ENCODE measurements at regions of chr3 and their contacts with region 1.

Region 1: DNA sequence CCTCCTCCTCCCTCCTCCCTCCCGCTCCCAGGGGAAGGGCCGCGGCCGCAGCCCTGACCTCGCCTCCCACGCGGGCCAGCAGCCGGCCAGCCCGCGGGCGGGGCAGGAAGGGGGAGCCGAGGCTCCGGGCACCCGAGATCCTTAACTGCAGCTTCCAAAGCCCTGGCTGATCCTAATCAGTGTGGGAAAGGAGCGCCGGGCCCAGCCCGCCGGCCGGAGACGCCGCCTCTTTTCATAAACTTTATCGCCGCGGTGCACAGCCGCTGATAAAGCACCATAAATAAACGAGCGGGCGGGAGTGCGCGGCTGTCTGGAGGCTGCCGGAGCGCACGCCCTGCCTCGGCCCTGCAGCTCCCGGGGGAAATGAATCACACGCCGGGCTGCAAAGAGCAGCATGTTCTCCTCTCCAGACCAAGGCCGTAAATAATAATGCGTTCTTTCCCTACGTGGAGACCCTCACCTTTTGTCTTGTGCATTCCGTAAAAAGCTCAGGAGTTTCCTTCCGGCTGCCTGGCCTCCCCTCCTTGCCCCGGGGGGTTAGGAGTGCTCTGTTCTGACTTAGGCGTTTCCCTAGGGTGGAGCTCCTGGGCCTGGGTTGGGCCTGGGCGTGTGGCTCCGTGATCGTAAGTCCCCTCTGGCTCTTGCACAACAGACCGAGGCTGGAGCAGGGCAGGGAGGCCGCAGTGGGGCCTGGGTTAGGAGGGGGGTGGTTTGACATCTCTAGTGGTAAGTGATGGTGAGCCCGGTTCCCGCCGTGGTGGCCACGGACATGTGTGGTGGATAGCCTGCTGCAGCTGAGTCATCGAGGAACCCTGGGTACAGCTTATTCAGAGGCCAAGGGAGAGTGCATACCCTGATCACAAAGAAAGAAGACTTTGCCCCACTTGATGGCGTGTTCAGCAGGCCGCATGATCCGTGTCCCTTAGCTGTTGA is 132.6 kb upstream of the HES1 start:
- DNase-seq: peak; percentile 90
- ATAC-seq: peak; percentile 79
- H3K4me3 ChIP-seq: peak overlapping the region; percentile 56
- H3K27ac ChIP-seq: peak overlapping the region; percentile 82
- H3K4me1 ChIP-seq: peaks cover 40% of the 10 kb centered on the region
- H3K27me3 ChIP-seq: no peaks in the 10 kb centered on the region
- CTCF ChIP-seq: no peak

Region 2: GRCh38 chr3:193253986-193254660 is 749.3 kb before region 1 on chr3:
- CTCF ChIA-PET with region 1: no interaction called
- POLR2A ChIA-PET with region 1: no interaction called
- intact Hi-C with region 1: no loop called
- DNase-seq: no peak
- ATAC-seq: no peak
- H3K4me3 ChIP-seq: no peak overlapping the region
- H3K27ac ChIP-seq: no peak overlapping the region
- H3K4me1 ChIP-seq: no peaks in the 10 kb centered on the region
- H3K27me3 ChIP-seq: peaks cover 22% of the 10 kb centered on the region
- CTCF ChIP-seq: no peak

Region 3: DNA sequence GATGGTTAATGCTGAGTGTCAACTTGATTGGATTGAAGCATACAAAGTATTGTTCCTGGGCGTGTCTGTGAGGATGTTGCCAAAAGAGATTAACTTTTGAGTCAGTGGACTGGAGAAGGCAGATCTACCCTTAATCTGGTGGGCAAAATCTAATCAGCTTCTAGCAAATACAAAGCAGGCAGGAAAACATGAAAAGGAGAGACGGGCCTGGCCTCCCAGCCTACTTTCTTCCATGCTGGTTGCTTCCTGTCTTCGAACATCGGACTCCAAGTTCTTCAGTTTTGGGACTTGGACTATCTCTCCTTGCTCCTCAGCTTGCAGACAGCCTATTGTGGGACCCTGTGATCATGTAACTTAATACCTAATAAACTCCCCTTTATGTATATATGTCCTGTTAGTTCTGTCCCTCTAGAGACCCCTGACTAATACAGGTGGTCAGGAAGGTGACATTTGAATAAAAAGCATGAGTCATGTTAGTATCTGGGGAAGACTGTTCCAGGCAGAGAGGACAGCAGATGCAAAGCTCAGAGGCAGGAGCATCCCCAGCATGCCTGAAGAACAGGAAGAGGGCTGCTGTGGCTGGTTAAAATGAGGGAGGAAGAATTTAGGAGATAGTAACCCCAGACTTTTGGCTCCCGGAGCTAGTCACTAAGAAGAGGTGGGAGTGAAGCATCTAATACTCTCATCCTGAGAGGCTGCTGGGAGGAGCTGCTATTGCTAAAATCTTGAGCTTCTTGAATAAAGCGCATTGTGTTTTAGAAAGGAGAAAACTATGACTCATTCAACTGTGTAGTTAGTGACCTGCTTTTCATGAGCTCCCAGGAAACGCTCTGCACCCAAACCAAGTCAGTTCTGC is 74.8 kb before region 1 on chr3:
- CTCF ChIA-PET with region 1: no interaction called
- POLR2A ChIA-PET with region 1: interaction called, 7 read pairs
- intact Hi-C with region 1: loop called (anchors 1 kb)
- DNase-seq: peak; percentile 87
- ATAC-seq: peak; percentile 94
- H3K4me3 ChIP-seq: peak overlapping the region; percentile 6; the same call in 1 of the 2 replicates
- H3K27ac ChIP-seq: peak overlapping the region; percentile 88
- H3K4me1 ChIP-seq: peaks cover 28% of the 10 kb centered on the region
- H3K27me3 ChIP-seq: no peaks in the 10 kb centered on the region
- CTCF ChIP-seq: no peak

Region 4: GRCh38 chr3:193971261-193971751 is 32.1 kb before region 1 on chr3:
- CTCF ChIA-PET with region 1: interaction called, 3 read pairs
- POLR2A ChIA-PET with region 1: interaction called, 9 read pairs
- intact Hi-C with region 1: loop called (anchors 1 kb)
- DNase-seq: peak; percentile 81
- ATAC-seq: peak; percentile 86
- H3K4me3 ChIP-seq: peak overlapping the region; percentile 66
- H3K27ac ChIP-seq: peak overlapping the region; percentile 91
- H3K4me1 ChIP-seq: peaks cover 35% of the 10 kb centered on the region
- H3K27me3 ChIP-seq: no peaks in the 10 kb centered on the region
- CTCF ChIP-seq: no peak

Region 5: GRCh38 chr3:194070634-194071409 is 67.4 kb after region 1 on chr3:
- CTCF ChIA-PET with region 1: no interaction called
- POLR2A ChIA-PET with region 1: interaction called, 3 read pairs
- intact Hi-C with region 1: loop called (anchors 1 kb)
- DNase-seq: peak; percentile 93
- ATAC-seq: peak; percentile 80
- H3K4me3 ChIP-seq: peak overlapping the region; percentile 60
- H3K27ac ChIP-seq: no peak overlapping the region
- H3K4me1 ChIP-seq: peaks cover 35% of the 10 kb centered on the region
- H3K27me3 ChIP-seq: no peaks in the 10 kb centered on the region
- CTCF ChIP-seq: no peak

Region 6: GRCh38 chr3:194089357-194090177 is 86.2 kb after region 1 on chr3:
- CTCF ChIA-PET with region 1: no interaction called
- POLR2A ChIA-PET with region 1: interaction called, 5 read pairs
- intact Hi-C with region 1: loop called (anchors 1 kb)
- DNase-seq: peak; percentile 99
- ATAC-seq: peak; percentile 88
- H3K4me3 ChIP-seq: 0 out of 2 replicates have a peak overlapping the region, but pooled peaks have one; percentile 21
- H3K27ac ChIP-seq: peak overlapping the region; percentile 73
- H3K4me1 ChIP-seq: peaks cover 39% of the 10 kb centered on the region
- H3K27me3 ChIP-seq: no peaks in the 10 kb centered on the region
- CTCF ChIP-seq: no peak

Region 7: GRCh38 chr3:194141415-194142155 is 138.2 kb after region 1 on chr3:
- CTCF ChIA-PET with region 1: no interaction called
- POLR2A ChIA-PET with region 1: interaction called, 15 read pairs
- intact Hi-C with region 1: no loop called
- DNase-seq: peak; percentile 94
- ATAC-seq: peak; percentile 44
- H3K4me3 ChIP-seq: peak overlapping the region; percentile 53
- H3K27ac ChIP-seq: peak overlapping the region; percentile 87
- H3K4me1 ChIP-seq: peaks cover 45% of the 10 kb centered on the region
- H3K27me3 ChIP-seq: no peaks in the 10 kb centered on the region
- CTCF ChIP-seq: no peak

Region 8: DNA sequence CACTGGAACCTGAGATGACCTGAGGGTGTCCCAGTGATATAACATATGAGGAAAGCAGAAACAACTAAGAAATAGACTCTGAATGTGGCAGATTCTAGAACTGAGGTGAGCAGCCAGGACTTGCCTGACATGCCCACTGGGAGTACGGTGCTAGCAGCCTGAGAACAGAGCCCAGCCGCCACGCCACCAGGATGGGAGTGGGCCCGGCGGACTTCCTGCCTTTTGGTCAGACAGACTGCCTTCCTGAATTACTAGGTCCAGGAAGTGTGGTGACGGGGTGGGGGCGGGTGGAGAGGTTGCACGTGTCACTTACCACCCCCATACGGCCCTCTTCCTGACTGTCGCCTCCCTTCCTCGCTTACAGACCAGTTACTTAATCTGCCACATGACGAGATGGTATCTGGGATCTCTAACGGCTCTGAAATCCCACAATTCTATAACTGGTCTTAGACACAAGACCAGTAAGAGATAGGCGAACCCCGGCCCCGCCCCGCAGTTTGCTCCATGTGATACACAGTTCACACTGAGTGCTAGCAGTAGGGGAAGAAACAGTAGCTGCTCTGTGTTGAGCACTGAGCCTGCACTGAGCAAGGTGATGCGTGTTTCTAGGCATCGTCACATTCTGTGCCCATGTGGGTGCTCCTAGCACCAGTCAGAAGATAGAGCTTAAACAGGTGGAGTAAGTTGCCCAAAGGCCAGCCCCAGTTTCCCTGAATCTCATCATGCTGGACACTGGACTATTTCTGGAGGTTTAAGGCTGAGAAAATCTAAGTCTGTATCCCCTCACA is 252.1 kb after region 1 on chr3:
- CTCF ChIA-PET with region 1: no interaction called
- POLR2A ChIA-PET with region 1: no interaction called
- intact Hi-C with region 1: no loop called
- DNase-seq: no peak
- ATAC-seq: no peak; the same call in 1 of the 2 replicates
- H3K4me3 ChIP-seq: no peak overlapping the region
- H3K27ac ChIP-seq: no peak overlapping the region
- H3K4me1 ChIP-seq: no peaks in the 10 kb centered on the region
- H3K27me3 ChIP-seq: no peaks in the 10 kb centered on the region
- CTCF ChIP-seq: no peak

Region 9: DNA sequence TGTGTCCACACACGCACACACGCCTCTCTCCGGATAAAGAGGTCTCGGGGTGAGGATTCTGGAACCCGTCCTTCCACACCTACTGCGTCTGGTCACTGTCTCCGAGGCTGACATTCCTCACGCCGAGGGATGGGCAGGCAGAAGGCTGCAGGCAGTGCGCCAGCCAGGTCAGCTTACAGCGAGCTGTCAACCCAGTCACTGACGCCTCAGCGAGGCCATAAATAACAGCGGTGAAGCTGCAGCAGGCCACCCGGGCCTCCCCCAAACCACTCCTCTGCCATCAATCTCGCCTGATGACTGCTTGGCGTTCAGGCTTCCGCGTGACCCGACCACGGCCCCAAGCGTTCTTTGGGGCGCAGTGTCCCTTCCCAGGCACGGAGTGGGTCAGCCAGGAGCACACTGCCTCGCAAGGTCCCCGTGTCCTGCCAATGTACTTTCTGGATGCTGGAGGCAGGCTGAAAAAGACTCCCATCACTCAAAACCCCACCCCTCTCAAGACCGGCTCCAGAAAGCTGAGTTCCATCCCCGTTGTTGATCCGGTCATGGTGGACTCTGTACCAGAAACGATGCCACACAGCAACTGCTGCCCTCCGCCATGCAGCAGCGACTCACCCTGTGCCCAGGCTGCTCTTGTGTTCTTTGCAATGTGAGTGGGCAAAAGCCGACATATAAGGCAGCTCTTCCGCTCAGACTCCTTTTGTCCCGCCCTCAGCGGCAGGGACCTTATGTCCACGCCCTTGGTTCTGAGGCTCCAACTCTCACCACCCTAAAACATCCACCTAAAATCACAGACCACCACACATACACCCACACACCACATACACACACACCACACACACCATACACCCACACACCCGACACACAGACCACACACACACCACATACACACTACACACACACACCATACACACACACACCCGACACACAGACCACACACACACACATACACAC is 320.7 kb after region 1 on chr3:
- CTCF ChIA-PET with region 1: no interaction called
- POLR2A ChIA-PET with region 1: interaction called, 7 read pairs
- intact Hi-C with region 1: loop called (anchors 2 kb)
- DNase-seq: peak; percentile 96
- ATAC-seq: peak; percentile 57
- H3K4me3 ChIP-seq: peak overlapping the region; percentile 57
- H3K27ac ChIP-seq: peak overlapping the region; percentile 100
- H3K4me1 ChIP-seq: peaks cover 44% of the 10 kb centered on the region
- H3K27me3 ChIP-seq: no peaks in the 10 kb centered on the region
- CTCF ChIP-seq: no peak